MCF 10A (cell line): ENCODE measurements at regions of chr13 and their contacts with region 1.

Region 1: DNA sequence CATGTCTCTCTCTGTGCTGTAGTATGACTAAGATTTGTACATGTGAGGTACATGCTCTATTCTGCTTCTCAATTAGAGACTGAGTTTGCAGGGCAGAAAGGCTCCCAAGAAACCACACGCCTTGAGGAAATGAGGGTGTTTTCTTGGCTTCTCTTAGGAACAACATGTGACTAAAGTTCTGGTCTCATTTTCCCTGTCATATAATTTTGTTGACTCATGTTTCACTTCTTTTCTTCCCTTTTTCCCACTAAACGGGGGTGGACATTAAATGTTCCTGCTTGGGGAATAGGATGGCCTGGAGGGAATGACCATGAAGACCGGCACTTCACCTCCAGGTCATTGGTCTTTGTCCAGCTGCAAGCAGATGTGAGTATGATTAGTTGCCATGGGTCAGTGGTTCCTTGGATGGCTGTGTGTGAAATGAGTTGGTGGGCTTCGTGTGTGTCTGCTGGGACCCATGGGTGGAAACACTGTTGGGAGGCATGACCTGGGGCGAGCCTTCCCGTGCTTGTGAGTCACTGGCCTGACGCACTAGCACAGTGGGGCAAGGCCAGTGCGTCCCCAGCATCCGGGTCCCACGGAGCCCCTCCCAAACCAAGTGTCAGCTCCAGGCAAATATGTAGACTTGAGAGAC is 56.6 kb downstream of the COL4A1 start:
- DNase-seq: peak; percentile 77
- H3K4me3 Mint-ChIP-seq: no peak overlapping the region
- H3K27ac Mint-ChIP-seq: peak overlapping the region; percentile 86
- H3K4me1 Mint-ChIP-seq: peaks cover 19% of the 10 kb centered on the region
- H3K27me3 Mint-ChIP-seq: no peaks in the 10 kb centered on the region
- CTCF ChIP-seq: no peak

Region 2: DNA sequence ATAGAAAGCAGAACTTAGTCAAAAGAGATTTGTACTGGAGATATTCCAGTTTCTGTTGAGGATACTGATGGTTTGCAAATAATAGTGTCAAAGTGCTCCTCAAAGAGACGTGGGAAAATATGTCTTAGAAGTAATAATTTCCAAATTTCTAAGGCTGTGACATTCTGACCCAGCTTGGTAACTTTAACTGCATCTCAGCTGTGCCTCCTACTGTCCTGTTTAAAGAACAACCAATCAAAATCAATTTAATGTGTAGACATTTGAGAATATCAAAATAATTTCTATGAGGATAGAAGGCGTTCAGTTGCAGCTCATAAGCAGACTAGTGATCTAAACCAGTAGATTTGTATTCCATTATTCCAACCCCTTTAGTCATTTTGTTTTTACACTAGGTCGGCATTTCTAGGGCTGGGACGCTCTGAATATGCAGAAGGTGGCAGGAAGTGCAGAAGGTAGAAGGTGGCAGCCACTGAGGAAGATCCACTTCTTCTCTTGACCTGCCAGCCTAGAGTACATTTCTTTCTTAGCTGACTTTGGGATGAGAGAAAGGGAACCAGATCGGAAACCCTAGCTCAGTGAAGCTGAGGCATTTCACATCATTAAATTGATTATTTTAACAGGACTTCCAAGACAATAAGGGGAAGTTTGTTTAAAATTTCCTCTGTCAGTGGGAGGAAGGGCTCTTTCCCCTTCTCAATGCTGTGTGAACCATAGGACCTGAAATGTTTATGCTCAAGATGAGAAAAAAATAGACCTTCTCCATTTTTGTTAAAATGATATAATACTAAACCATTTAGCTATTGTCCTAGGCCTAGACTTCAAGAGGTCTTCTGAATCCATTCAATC is 10.9 kb before region 1 on chr13:
- CTCF ChIA-PET with region 1: interaction called, 13 read pairs
- POLR2A ChIA-PET with region 1: no interaction called
- intact Hi-C with region 1: no loop called
- DNase-seq: no peak
- H3K4me3 Mint-ChIP-seq: no peak overlapping the region
- H3K27ac Mint-ChIP-seq: no peak overlapping the region
- H3K4me1 Mint-ChIP-seq: no peaks in the 10 kb centered on the region
- H3K27me3 Mint-ChIP-seq: no peaks in the 10 kb centered on the region
- CTCF ChIP-seq: no peak